ENCODE measurements at regions of chr4 and their contacts with region 1.

Region 1: GRCh38 chr4:169810325-169811323 is 52.9 kb upstream of the HPF1 start:
- DNase-seq: peak; percentile 64
- H3K4me3 ChIP-seq: no peak overlapping the region; a peak in 1 of 4 replicates
- H3K27ac ChIP-seq: no peak overlapping the region; a peak in 1 of 4 replicates
- H3K4me1 ChIP-seq: peaks cover 0 to 20% of the 10 kb centered on the region in 2 experiments; a peak in 2 of 4 replicates
- H3K27me3 ChIP-seq: no peaks in the 10 kb centered on the region
- CTCF ChIP-seq: peak; percentile 93
- EP300 ChIP-seq: no peak
- RAD21 ChIP-seq: peak; percentile 81

Region 2: DNA sequence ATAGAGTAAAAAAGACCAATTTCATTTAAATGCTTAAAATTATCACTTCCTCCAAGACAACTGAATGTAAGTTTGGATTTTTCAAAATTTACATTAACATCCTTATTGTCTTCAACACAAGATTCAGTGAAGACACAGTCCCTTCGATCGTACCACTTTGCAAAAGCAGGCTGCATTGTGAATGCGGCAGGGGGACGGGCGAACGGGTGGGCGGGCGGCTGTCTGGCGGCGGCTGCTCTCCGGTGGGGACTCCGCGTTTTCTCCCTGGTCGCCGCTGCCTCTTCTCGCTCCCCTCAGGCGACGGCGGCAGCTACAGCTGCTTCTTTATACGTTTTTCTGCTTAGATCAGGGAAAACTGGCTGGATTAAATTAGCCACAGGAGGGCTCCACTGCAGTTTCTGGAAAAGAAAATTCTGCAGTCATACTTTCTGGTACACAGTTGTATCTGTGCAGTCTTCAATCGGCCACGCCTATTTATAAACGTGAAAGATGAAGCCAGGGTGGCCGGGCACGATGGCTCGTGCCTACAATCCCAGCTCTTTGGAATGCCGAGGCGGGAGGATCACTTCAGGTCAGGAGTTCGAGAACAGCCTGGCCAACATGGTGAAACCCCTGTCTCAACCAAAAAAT is 19.0 kb before region 1 on chr4:
- CTCF ChIA-PET with region 1: interaction called, 12 read pairs
- POLR2A ChIA-PET with region 1: no interaction called
- DNase-seq: peak; percentile 81
- H3K4me3 ChIP-seq: peak overlapping the region; percentile 35 to 48
- H3K27ac ChIP-seq: peak overlapping the region in 1 of 2 experiments; percentile 80; a peak in 2 of 4 replicates
- H3K4me1 ChIP-seq: peaks cover 2 to 12% of the 10 kb centered on the region in 2 experiments; a peak in 2 of 4 replicates
- H3K27me3 ChIP-seq: no peaks in the 10 kb centered on the region
- CTCF ChIP-seq: peak; percentile 72
- EP300 ChIP-seq: no peak
- RAD21 ChIP-seq: peak; percentile 70

Region 3: DNA sequence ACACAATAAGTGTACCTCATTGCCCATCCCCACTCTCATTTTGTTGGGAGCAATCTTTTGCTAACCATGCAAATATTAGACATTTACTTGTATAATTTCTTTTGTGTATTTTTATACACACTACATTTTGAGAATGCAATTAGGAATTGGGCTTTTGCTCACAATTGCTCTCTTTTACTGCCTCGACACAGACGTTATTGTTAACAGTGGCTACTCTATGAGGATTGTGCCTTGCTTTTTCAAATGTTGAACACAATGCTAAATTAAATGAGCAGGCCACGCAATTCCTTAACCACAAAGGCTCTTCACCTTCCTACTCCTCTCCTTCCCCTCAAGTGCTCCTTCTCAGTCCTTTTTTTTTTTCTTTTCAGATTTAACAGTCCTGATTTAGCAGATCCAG is 10.1 kb before region 1 on chr4:
- CTCF ChIA-PET with region 1: interaction called, 10 read pairs
- POLR2A ChIA-PET with region 1: no interaction called
- DNase-seq: no peak
- H3K4me3 ChIP-seq: no peak overlapping the region
- H3K27ac ChIP-seq: no peak overlapping the region
- H3K4me1 ChIP-seq: peaks cover 0 to 4% of the 10 kb centered on the region in 2 experiments; a peak in 1 of 4 replicates
- H3K27me3 ChIP-seq: no peaks in the 10 kb centered on the region
- CTCF ChIP-seq: no peak
- EP300 ChIP-seq: no peak
- RAD21 ChIP-seq: no peak

Region 4: GRCh38 chr4:170027181-170027829 is 216.7 kb after region 1 on chr4:
- CTCF ChIA-PET with region 1: interaction called, 34 read pairs
- POLR2A ChIA-PET with region 1: interaction called, 3 read pairs
- DNase-seq: peak; percentile 95
- H3K4me3 ChIP-seq: peak overlapping the region; percentile 87 to 98
- H3K27ac ChIP-seq: peak overlapping the region; percentile 89 to 92
- H3K4me1 ChIP-seq: peaks cover 0 to 3% of the 10 kb centered on the region in 2 experiments; a peak in 1 of 4 replicates
- H3K27me3 ChIP-seq: no peaks in the 10 kb centered on the region
- CTCF ChIP-seq: no peak
- EP300 ChIP-seq: no peak
- RAD21 ChIP-seq: no peak

Region 5: DNA sequence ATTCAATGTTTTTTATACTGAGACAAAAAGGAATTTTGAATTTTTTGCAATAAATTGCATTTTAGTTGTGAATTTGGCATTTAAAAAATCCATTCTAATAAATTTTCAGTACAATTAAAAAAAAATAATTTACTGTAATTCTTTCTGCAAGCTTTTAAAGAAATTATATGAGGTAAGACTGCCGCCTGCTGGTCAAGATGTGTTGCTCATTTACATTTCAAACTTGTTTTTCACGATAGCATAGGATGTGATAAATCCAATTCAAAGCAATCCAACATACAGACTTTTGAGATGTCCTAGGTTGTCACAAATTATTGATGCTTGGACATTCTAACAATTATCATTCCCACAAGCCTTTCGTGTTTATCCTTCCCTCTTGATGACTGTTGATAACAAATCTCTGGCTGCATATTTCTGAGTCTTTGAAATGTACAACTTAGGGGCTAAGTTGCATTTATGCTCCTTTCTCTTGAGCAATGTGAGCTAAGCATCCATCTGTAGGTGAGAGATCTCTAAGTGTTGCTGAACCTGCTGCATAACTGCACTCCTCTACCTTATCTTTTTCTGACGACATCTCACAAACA is 237.2 kb after region 1 on chr4:
- CTCF ChIA-PET with region 1: interaction called, 33 read pairs
- POLR2A ChIA-PET with region 1: no interaction called
- DNase-seq: peak; percentile 51
- H3K4me3 ChIP-seq: no peak overlapping the region
- H3K27ac ChIP-seq: no peak overlapping the region
- H3K4me1 ChIP-seq: no peaks in the 10 kb centered on the region
- H3K27me3 ChIP-seq: no peaks in the 10 kb centered on the region
- CTCF ChIP-seq: peak; percentile 89
- EP300 ChIP-seq: no peak
- RAD21 ChIP-seq: peak; percentile 86

Measured in SK-N-SH (cell line).